HepG2 (cell line): ENCODE measurements at regions of chr17 and their contacts with region 1.

Region 1: DNA sequence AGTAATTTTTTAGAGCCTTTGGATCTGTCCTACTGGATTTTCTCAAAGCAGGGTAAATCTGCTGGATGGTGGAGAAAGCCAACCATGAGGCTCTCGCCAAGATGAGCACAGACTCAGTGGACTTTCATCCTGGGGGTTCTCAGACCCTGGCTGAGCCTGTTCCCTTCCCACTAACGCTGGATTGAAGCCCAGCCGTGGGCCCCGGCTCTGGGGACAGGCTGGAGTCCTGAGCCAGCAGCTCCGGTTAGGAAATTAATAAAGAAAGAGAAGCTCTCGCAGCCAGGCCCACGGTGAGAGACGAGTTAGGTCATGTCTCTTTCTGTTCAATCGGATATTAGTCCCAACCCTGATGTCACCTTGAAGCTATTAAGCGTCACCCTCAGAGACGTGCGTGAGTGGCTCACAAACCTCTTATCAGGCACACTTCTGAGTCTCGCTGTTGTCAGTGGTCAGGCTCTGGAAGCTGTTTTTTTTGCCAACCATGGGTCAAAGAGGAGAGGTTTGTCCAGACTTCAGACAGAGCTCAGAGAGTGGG is 27.1 kb downstream of the MEOX1 start:
- DNase-seq: peak; percentile 53
- ATAC-seq: peak; percentile 47
- H3K4me3 ChIP-seq: peak overlapping the region; percentile 14 to 57 (median 52)
- H3K27ac ChIP-seq: no peak overlapping the region
- H3K4me1 ChIP-seq: peaks cover 45% of the 10 kb centered on the region
- H3K27me3 ChIP-seq: peaks cover 2 to 13% of the 10 kb centered on the region in 2 experiments; a peak in 1 of 5 replicates
- CTCF ChIP-seq: no peak
- EP300 ChIP-seq: no peak
- POLR2A ChIP-seq: no peak; a peak in 1 of 4 replicates
- RAD21 ChIP-seq: no peak

Region 2: DNA sequence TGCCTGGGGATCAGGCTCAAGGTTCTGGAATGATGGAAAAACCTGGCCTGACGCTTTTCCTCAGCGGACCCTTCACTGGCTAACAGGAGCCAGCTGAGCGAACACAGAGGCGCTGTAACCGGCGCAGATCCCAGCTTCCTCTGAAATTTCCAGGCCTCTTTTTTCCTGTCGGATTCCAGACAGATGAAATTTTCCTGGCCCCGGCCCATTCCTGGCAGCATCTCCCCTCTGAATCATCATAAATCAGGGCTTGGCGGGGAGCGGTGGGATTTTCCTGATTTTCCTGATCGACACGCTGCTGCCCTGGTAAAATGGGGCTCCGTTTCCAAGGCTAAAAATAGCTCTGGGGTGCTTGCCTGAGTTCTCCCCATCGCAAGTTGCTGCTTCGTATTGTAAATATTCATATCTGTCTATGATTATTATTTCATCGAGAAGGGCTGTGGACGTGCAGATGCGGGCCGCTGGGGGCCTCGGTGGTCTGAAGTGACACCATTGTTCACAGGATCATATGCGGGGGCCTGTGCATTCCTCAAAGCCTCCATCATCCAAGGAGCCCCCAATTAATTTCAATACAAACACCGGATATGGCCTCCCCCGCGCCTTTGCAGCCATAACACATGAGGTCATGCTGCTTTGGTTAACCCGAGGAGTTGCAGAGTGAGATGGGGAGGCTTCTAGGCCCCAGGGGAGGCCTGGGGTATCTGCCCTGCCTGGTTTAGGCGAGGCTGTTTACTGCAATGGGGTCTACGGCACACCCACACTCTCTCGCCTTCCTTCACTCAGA is 42.7 kb before region 1 on chr17:
- CTCF ChIA-PET with region 1: no interaction called
- POLR2A ChIA-PET with region 1: no interaction called
- in situ Hi-C with region 1: no loop called
- intact Hi-C with region 1: loop called (anchors 5 kb)
- DNase-seq: no peak
- ATAC-seq: no peak
- H3K4me3 ChIP-seq: no peak overlapping the region
- H3K27ac ChIP-seq: no peak overlapping the region
- H3K4me1 ChIP-seq: peaks cover 41% of the 10 kb centered on the region
- H3K27me3 ChIP-seq: no peaks in the 10 kb centered on the region
- CTCF ChIP-seq: no peak
- EP300 ChIP-seq: no peak
- POLR2A ChIP-seq: no peak
- RAD21 ChIP-seq: no peak